AG04449 (cell line): ENCODE measurements at regions of chr7 and their contacts with region 1.

Region 1: DNA sequence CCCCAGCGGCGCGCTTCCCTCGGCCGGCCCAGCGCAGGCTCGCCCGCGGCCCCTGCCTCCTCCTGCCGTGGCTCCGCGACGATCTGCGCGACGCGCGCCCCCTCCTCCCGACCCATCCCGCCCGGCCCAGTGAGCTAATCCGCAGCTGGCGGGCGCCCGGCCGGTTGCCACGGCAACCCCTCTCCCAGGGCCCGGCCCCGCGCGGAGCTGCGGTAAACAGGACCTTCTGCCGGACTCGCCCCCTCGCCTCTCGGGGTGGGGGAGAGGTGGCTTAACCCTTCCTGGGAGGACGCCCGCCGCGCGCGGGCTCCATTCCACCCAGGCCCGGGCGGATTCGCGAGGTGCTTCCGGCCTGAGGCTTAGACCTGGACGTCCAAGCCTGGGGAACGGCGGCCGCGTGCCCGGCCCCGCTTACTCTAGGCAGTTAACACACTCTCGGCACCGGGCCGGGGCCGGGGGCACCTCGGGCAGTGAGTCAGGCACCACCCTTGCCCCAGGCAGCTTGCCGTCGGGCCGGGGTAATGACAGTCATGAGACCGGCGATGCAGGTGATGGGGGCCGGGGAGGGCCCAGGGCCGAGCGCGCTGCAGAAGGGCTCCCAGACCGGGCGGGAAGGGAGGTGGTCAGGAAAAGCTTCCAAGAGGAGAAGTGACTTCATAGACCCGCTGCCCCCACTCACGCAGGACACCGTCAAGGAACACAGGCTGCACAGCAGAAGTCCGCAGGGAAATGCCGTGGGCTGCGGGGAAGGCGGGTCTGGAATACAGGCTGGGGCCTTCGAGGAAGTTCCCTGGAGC is at the start of gene DENND2A:
- DNase-seq: no peak
- H3K4me3 ChIP-seq: peak within 1 kb of the TSS; percentile 68
- CTCF ChIP-seq: no peak

Region 2: DNA sequence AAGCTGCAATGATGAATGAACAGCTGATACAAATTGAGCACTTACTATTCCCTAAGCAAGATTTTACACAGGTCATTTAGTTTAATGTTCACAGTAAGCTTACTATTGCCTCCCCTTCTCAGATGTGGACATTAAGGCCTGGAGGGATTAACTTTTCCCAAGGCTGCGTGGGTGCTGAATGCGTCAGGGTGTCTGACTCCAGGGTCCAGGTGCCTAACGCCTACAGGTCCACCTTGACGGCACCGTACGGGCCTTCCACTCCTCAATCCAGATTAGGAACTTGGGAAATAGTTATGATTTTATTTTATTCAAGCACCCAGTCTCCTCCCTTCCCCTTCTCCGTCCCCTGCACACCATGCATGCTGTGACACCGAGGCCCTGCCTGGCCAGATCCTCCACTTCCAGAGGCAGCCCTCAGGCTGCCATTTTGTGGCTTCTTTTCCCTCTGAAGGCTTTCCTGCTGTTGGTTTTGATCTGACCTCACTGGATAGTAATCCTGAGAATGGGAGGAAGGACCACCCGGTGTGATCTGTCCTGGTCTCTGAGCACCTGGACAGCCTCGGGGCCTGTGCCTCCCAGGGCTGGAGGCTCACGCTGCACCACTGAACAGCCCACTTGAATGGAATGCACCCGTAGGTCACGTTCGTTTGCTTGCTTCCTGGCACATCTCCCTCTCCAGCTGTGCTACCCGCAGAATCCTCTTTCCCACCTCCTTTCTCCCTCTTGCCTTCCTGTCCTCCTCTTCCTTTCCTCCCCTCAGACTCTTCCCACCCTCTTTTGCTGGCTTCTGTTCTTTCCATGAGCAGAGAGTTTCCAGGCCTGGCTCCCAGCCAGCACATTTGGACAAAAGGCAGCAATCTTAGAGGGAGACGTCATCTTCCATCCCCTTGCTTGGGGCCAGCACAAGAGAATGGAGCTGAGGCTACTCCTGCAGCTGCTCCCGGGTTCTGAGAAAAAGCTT is 14.7 kb before region 1 on chr7:
- CTCF ChIA-PET with region 1: interaction called, 11 read pairs
- POLR2A ChIA-PET with region 1: interaction called, 7 read pairs
- DNase-seq: peak; percentile 85
- H3K4me3 ChIP-seq: no peak overlapping the region
- CTCF ChIP-seq: no peak